ENCODE measurements at regions of chr6 and their contacts with region 1.

Region 1: GRCh38 chr6:39309942-39310531 is 4.2 kb downstream of the KCNK17 start:
- DNase-seq: no peak
- H3K4me3 ChIP-seq: no peak overlapping the region
- H3K27ac ChIP-seq: no peak overlapping the region
- H3K4me1 ChIP-seq: peaks cover 11 to 21% (median 18%) of the 10 kb centered on the region in 4 donors
- H3K27me3 ChIP-seq: peaks cover 0 to 54% (median 21%) of the 10 kb centered on the region in 4 donors
- CTCF ChIP-seq: peak; percentile 73 to 88 (median 80)
- EP300 ChIP-seq: no peak
- POLR2A ChIP-seq: no peak

Region 2: GRCh38 chr6:38871741-38872568 is 438.1 kb before region 1 on chr6:
- intact Hi-C with region 1: loop called (anchors 5 kb)
- DNase-seq: no peak
- H3K4me3 ChIP-seq: no peak overlapping the region
- H3K27ac ChIP-seq: no peak overlapping the region
- H3K4me1 ChIP-seq: no peaks in the 10 kb centered on the region
- H3K27me3 ChIP-seq: peaks cover 0 to 6% (median 0%) of the 10 kb centered on the region in 4 donors
- CTCF ChIP-seq: peak; percentile 72 to 86 (median 73)
- EP300 ChIP-seq: no peak
- POLR2A ChIP-seq: no peak

Region 3: DNA sequence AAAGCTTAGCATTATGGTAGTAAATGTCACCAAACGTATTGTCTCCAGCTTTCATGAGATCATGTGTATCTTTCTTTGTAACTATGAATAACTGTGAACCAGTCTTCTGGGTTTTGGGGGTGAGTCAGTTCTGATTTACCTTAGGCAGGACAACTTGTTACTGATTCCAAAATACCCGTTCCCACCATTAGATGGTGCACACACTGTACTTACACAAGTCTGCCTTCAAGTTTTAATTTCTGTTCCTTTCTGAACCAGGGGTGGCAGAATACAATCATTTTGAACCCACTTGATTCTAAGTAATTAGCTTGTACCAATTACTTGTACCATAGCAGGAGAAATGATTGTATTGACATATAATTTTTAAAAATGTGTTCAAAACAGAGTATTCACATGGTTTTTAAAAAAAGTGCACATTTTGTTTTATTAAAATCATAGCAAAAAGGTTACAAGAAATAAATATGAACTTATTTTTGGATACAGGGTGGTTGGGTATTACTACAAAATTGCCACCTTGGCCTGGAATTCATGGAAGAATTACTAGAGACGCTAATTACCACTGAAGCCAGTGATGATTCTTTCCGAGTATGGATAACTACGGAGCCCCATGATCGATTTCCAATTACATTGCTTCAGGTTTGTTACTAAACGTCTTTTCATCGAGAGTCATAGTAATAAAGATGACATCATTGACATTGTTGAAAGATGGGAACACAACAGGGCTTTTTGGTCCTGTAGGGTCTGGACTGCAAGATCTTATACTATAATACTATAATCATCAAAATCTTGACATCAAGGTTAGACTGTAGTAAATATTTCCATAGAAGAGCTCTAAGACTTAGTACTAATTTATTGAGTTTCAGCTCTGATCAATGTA is 336.6 kb before region 1 on chr6:
- intact Hi-C with region 1: loop called (anchors 5 kb)
- DNase-seq: no peak
- H3K4me3 ChIP-seq: no peak overlapping the region
- H3K27ac ChIP-seq: no peak overlapping the region
- H3K4me1 ChIP-seq: peaks cover 0 to 4% (median 0%) of the 10 kb centered on the region in 4 donors
- H3K27me3 ChIP-seq: peaks cover 0 to 21% (median 0%) of the 10 kb centered on the region in 4 donors
- CTCF ChIP-seq: peak; percentile 42 to 55 (median 44)
- EP300 ChIP-seq: no peak
- POLR2A ChIP-seq: no peak